ENCODE measurements at regions of chr2 and their contacts with region 1.

Region 1: DNA sequence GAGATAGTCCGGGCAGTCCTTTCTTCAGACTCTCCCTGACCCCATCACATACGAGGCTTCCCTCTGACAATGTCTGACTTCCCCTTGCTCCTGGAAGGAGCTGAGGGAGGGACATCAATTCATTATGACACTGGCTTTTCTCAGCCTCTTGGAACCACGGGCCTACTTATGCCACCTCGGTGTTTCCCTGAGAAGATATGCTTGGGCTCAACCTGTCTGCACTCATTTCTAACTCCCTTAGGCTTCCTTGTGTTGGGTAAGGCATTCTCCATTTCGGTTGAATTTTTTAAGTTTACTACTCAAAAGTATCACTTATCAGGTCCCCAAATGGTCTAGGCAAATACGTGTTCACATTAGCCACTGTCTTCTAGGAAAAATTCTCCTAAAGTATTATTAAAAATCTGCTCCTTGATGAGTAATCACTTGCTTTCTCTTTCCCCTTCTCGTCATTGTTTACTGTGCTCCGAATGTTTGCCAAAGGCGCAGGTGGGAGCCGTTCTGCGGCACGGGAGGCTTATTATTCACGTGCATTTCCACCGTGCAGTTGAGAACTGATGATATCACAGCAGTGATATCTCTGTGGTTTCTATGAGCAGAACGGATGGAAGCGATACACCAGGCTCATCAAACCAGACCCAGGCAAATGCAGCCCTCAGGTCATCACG is 33.1 kb downstream of the ARL4C start:
- DNase-seq: peak; percentile 85
- ATAC-seq: peak; percentile 80
- H3K4me3 Mint-ChIP-seq: peak overlapping the region; percentile 65
- H3K27ac Mint-ChIP-seq: peak overlapping the region; percentile 80
- H3K4me1 Mint-ChIP-seq: peaks cover 64% of the 10 kb centered on the region
- H3K27me3 Mint-ChIP-seq: no peaks in the 10 kb centered on the region
- CTCF ChIP-seq: no peak

Region 2: DNA sequence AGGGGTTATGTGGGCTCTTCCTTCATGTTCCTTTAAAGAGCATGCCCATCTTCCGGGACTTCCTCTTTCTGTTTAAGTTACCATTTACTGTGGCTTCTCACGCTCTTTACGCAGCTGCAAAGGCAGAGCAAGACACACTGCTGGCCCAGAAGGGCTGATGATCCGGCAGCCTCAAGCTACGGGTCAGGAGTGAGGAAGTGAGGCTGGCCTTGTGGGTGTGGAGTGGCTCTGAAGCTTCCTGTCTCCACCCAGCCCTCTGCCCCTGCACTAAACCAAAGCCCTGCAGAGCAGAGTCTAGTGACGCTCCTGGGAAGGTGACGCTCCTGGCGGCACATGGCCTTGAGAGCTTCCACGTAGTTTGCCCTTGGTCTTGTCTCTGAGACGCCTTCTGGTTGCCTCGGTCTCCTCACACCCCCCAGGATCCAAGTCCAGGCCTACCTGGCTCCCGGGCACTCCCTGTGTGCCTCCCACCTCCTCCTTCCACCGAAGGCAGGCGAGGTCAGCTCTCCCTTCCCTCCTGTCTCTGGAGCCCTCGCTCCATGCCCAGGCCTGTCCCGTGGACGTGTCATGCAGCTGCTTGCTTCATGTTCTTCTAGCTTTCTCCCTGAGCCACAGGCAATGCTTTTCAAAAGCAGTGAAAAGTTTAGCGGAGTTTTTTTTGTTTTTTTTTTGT is 17.2 kb before region 1 on chr2:
- CTCF ChIA-PET with region 1: interaction called, 10 read pairs
- POLR2A ChIA-PET with region 1: interaction called, 16 read pairs
- intact Hi-C with region 1: no loop called
- DNase-seq: peak; percentile 90
- ATAC-seq: peak; percentile 94
- H3K4me3 Mint-ChIP-seq: peak overlapping the region; percentile 55
- H3K27ac Mint-ChIP-seq: peak overlapping the region; percentile 94
- H3K4me1 Mint-ChIP-seq: peaks cover 71% of the 10 kb centered on the region
- H3K27me3 Mint-ChIP-seq: no peaks in the 10 kb centered on the region
- CTCF ChIP-seq: no peak

Region 3: DNA sequence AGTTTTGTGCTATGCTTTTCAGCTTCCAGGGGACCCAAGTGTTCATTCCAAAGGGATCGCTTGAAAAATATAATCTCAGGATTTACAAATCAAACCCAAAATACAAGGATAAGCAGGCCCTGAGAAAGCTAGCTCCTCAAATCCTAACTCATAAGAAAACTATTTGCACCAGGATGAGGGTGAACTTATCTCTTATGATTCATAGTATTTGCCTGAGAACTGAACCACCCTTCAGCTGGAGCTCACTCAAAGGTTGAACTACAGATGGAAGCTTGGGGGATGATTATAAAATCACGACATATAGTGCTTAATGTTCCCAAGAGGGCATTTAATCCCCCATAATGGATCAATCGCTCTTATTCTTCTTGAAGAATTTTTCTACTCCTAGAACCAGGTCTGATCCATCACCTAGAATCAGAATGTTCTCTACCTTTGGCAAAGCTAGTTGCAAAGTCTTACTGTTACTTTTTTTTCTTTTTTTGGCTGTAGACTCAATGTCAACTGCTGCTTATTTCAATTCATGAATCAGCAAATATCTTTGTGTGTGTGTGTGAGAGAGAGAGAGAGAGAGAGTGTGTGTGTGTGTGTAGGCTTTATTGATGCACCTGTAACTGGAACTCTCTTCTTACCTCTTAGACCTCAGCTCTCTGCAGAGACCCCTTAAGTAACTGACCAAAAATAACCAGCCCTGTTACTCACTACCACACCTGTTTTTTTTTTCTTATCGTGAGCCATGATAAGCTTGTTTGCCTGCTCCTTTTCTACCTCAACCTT is 11.7 kb before region 1 on chr2:
- CTCF ChIA-PET with region 1: interaction called, 10 read pairs
- POLR2A ChIA-PET with region 1: interaction called, 23 read pairs
- intact Hi-C with region 1: no loop called
- DNase-seq: no peak
- ATAC-seq: no peak
- H3K4me3 Mint-ChIP-seq: peak overlapping the region; percentile 77
- H3K27ac Mint-ChIP-seq: peak overlapping the region; percentile 89
- H3K4me1 Mint-ChIP-seq: peaks cover 70% of the 10 kb centered on the region
- H3K27me3 Mint-ChIP-seq: no peaks in the 10 kb centered on the region
- CTCF ChIP-seq: no peak

Region 4: GRCh38 chr2:234478121-234478858 is 14.5 kb after region 1 on chr2:
- CTCF ChIA-PET with region 1: interaction called, 36 read pairs
- POLR2A ChIA-PET with region 1: interaction called, 7 read pairs
- intact Hi-C with region 1: no loop called
- DNase-seq: peak; percentile 70
- ATAC-seq: peak; percentile 52
- H3K4me3 Mint-ChIP-seq: no peak overlapping the region
- H3K27ac Mint-ChIP-seq: peak overlapping the region; percentile 67
- H3K4me1 Mint-ChIP-seq: peaks cover 54% of the 10 kb centered on the region
- H3K27me3 Mint-ChIP-seq: no peaks in the 10 kb centered on the region
- CTCF ChIP-seq: no peak

Region 5: GRCh38 chr2:234483568-234484251 is 20.0 kb after region 1 on chr2:
- CTCF ChIA-PET with region 1: interaction called, 36 read pairs
- POLR2A ChIA-PET with region 1: interaction called, 14 read pairs
- intact Hi-C with region 1: no loop called
- DNase-seq: peak; percentile 95
- ATAC-seq: peak; percentile 85
- H3K4me3 Mint-ChIP-seq: peak overlapping the region; percentile 47
- H3K27ac Mint-ChIP-seq: peak overlapping the region; percentile 93
- H3K4me1 Mint-ChIP-seq: peaks cover 75% of the 10 kb centered on the region
- H3K27me3 Mint-ChIP-seq: no peaks in the 10 kb centered on the region
- CTCF ChIP-seq: peak; percentile 68

Region 6: GRCh38 chr2:234488913-234489451 is 25.2 kb after region 1 on chr2:
- CTCF ChIA-PET with region 1: interaction called, 36 read pairs
- POLR2A ChIA-PET with region 1: interaction called, 14 read pairs
- intact Hi-C with region 1: no loop called
- DNase-seq: peak; percentile 87
- ATAC-seq: peak; percentile 74
- H3K4me3 Mint-ChIP-seq: peak overlapping the region; percentile 68
- H3K27ac Mint-ChIP-seq: peak overlapping the region; percentile 96
- H3K4me1 Mint-ChIP-seq: peaks cover 80% of the 10 kb centered on the region
- H3K27me3 Mint-ChIP-seq: no peaks in the 10 kb centered on the region
- CTCF ChIP-seq: no peak

Region 7: DNA sequence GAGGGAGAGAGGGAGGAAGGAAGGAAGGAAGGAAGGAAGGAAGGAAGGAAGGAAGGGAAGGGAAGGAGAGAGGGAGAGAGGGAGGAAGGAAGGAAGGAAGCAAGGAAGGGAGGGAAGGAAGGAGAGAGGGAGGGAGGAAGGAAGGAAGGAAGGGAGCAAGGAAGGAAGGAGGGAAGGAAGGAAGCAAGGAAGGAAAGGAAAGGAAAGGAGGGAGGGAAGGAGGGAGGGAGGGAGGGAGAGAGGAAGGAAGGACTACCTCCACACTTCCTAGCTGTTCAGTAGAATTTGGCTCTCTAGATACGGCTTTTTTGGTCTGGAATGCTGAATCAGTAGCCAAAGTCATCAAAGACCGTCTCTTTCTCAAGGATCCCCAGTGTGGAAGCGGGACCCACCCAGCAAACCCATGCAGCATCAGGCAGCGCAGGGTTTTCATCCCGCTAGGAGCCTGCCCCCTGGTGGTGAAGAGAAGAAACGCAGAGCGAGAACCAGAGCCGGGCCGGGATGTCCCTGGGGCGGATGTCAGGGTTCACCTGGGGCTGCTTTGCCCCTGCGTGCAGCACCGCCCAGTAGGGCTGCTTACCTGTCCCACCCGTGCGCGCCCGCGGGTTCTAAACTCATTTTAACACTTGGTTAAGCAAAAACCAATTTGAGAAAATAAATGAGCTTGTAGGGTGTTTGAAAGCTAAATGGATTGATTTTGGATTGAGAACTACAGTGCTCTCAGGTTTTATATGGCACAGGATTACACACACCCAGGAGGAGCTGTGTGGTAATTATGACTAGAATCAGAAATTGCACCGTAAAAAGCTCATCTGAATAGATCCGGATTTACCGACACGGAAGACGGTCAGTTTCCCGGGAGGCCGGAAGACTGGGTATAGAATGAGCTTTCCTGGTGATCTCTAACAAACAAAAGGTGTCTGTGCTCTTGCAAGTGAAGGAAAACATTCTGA is 81.2 kb after region 1 on chr2:
- CTCF ChIA-PET with region 1: no interaction called
- POLR2A ChIA-PET with region 1: no interaction called
- intact Hi-C with region 1: no loop called
- DNase-seq: peak; percentile 84
- ATAC-seq: peak; percentile 94
- H3K4me3 Mint-ChIP-seq: no peak overlapping the region
- H3K27ac Mint-ChIP-seq: no peak overlapping the region
- H3K4me1 Mint-ChIP-seq: no peaks in the 10 kb centered on the region
- H3K27me3 Mint-ChIP-seq: peaks cover 10% of the 10 kb centered on the region
- CTCF ChIP-seq: peak; percentile 90